ENCODE measurements at regions of chr17 and their contacts with region 1.

Region 1: GRCh38 chr17:82236142-82236981 is 7.5 kb downstream of the SLC16A3 start:
- DNase-seq: peak; percentile 81
- ATAC-seq: peak; percentile 63
- H3K4me3 ChIP-seq: no peak overlapping the region
- H3K4me3 Mint-ChIP-seq: no peak overlapping the region
- H3K27ac ChIP-seq: no peak overlapping the region
- H3K27ac Mint-ChIP-seq: peak overlapping the region; percentile 37
- H3K4me1 ChIP-seq: peaks cover 17 to 69% of the 10 kb centered on the region in 2 donors
- H3K4me1 Mint-ChIP-seq: peaks cover 51% of the 10 kb centered on the region
- H3K27me3 ChIP-seq: no peaks in the 10 kb centered on the region
- H3K27me3 Mint-ChIP-seq: no peaks in the 10 kb centered on the region
- CTCF ChIP-seq: peak; percentile 83

Region 2: DNA sequence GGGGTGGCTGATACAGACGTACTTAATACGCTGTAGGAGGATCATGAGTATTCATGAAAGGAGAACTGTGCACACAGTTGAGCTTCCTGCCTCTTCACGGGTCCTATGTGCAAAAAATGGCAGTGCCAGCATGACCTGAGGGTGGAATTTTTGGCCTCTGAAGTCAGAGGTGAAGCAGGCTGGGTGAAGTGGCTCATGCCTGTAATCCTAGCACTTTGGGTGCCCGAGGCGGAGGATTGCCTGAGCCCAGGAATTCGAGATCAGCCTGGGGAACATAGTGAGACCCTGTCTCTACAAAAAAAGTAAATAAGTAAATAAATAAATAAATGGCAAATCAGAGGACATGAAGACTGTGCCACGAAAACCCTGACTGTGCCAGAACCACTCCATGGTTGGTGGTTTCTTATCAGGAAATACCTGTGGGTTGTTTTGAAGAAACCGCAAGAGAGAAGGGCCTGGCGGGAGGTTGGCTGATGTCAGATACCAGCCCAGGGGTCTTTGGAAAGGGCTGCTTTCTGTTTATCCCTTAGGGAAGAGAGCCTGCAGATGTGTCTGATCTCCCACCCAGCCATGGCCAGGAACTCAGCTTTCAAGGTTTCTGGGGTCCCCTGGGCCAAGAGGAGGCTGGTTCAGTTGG is 255.5 kb before region 1 on chr17:
- CTCF ChIA-PET with region 1: no interaction called
- POLR2A ChIA-PET with region 1: no interaction called
- intact Hi-C with region 1: no loop called
- DNase-seq: no peak
- ATAC-seq: no peak
- H3K4me3 ChIP-seq: no peak overlapping the region
- H3K4me3 Mint-ChIP-seq: no peak overlapping the region
- H3K27ac ChIP-seq: no peak overlapping the region
- H3K27ac Mint-ChIP-seq: no peak overlapping the region
- H3K4me1 ChIP-seq: peaks cover 25 to 36% of the 10 kb centered on the region in 2 donors
- H3K4me1 Mint-ChIP-seq: peaks cover 37% of the 10 kb centered on the region
- H3K27me3 ChIP-seq: no peaks in the 10 kb centered on the region
- H3K27me3 Mint-ChIP-seq: no peaks in the 10 kb centered on the region
- CTCF ChIP-seq: no peak

Region 3: DNA sequence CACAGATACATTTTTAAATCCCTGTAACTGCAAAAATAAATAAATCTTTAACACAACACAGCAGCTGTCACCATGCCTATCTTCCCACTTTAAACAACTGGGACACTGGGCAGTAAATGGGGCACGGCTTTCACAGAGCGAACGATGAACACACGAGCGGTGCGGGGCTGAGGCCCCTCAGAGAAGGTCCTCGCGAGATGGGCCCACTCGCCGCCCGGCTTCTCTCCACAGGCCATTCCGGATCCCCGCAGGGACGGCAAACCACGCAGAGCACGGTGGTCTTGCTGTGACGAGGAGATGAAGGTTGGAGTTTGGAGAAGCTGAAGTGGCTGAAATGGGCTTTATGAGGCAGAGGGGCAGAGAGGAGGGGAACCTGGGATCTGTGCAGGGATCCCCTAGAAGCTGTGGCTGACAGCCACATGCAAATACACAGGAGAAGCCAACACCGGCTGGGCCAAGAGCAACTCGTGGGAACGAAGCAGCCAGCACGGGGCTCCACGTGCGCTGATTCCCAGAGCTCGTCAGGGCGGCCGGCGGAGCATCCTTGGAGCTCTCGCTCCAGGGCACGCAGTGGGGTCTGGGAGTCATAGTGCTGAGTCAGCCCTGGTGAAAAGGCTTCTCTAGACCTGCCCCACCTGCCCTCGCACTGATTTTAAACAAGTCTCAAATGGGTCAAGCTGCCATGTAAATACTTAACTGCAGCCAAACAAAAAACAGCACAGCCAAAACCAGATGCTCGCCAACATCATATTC is 55.4 kb before region 1 on chr17:
- CTCF ChIA-PET with region 1: no interaction called
- POLR2A ChIA-PET with region 1: no interaction called
- intact Hi-C with region 1: no loop called
- DNase-seq: no peak
- ATAC-seq: no peak
- H3K4me3 ChIP-seq: no peak overlapping the region
- H3K4me3 Mint-ChIP-seq: no peak overlapping the region
- H3K27ac ChIP-seq: no peak overlapping the region
- H3K27ac Mint-ChIP-seq: no peak overlapping the region
- H3K4me1 ChIP-seq: no peaks in the 10 kb centered on the region
- H3K4me1 Mint-ChIP-seq: no peaks in the 10 kb centered on the region
- H3K27me3 ChIP-seq: no peaks in the 10 kb centered on the region
- H3K27me3 Mint-ChIP-seq: no peaks in the 10 kb centered on the region
- CTCF ChIP-seq: no peak

Region 4: GRCh38 chr17:82205719-82206508 is 30.4 kb before region 1 on chr17:
- CTCF ChIA-PET with region 1: interaction called, 29 read pairs
- POLR2A ChIA-PET with region 1: interaction called, 7 read pairs
- intact Hi-C with region 1: loop called (anchors 1 kb)
- DNase-seq: peak; percentile 89
- ATAC-seq: peak; percentile 98
- H3K4me3 ChIP-seq: peak overlapping the region in 3 of 5 experiments; percentile 3 to 34 (median 21)
- H3K4me3 Mint-ChIP-seq: peak overlapping the region; percentile 54
- H3K27ac ChIP-seq: peak overlapping the region; percentile 73
- H3K27ac Mint-ChIP-seq: peak overlapping the region; percentile 90
- H3K4me1 ChIP-seq: peaks cover 10 to 11% of the 10 kb centered on the region in 2 donors
- H3K4me1 Mint-ChIP-seq: peaks cover 19% of the 10 kb centered on the region
- H3K27me3 ChIP-seq: no peaks in the 10 kb centered on the region
- H3K27me3 Mint-ChIP-seq: no peaks in the 10 kb centered on the region
- CTCF ChIP-seq: peak; percentile 93